Activated CD4-positive, alpha-beta memory T cell treated with anti-CD3 and anti-CD28 coated beads, Interleukin-2, amount 10 ng/mL, durations not matched to agents 7 days and 5 days (primary cell): ENCODE measurements at regions of chr11 and their contacts with region 1.

Region 1: DNA sequence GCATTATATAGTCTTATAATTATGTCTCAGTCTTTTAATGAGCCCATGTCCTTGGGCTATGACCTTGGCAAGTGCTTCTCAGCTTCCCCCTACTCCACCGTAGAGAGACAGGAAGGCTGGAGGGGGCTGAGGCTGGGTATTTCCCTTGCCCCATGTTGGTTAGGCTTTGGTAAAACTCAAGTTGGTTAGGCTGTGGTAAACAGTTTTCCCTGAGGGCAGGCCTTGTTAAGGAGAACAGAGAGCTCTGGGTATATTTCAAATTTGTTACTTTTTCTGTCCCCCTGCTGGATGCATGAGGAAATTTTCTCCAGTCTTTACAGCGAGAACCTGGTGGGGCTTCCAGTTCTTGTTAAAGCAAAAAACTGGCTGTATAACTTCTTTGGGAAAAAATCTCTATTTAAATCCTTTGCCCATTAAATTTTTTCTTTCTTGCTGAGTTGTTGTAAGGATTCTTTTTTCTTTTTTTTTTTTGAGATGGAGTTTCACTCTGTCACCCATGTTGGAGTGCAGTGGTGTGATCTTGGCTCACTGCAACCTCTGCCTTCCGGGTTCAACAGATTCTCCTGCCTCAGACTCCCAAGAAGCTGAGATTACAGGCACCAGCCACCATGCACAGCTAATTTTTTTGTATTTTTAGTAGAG is 12.2 kb upstream of the DCHS1 start:
- DNase-seq: peak; percentile 57
- H3K4me3 Mint-ChIP-seq: no peak overlapping the region
- H3K27ac Mint-ChIP-seq: peak overlapping the region; percentile 2
- H3K4me1 Mint-ChIP-seq: peaks cover 59% of the 10 kb centered on the region
- H3K27me3 Mint-ChIP-seq: peaks cover 6% of the 10 kb centered on the region

Region 2: GRCh38 chr11:6531267-6531752 is 136.5 kb before region 1 on chr11:
- CTCF ChIA-PET with region 1: interaction called, 12 read pairs
- POLR2A ChIA-PET with region 1: no interaction called
- DNase-seq: peak; percentile 29
- H3K4me3 Mint-ChIP-seq: no peak overlapping the region
- H3K27ac Mint-ChIP-seq: no peak overlapping the region
- H3K4me1 Mint-ChIP-seq: peaks cover 10% of the 10 kb centered on the region
- H3K27me3 Mint-ChIP-seq: no peaks in the 10 kb centered on the region

Region 3: GRCh38 chr11:6603287-6604080 is 64.4 kb before region 1 on chr11 and contains the starts of genes ILK and RRP8:
- CTCF ChIA-PET with region 1: interaction called, 14 read pairs
- POLR2A ChIA-PET with region 1: interaction called, 7 read pairs
- DNase-seq: peak; percentile 91
- H3K4me3 Mint-ChIP-seq: no peak within 1 kb of the TSS
- H3K27ac Mint-ChIP-seq: no peak within 1 kb of the TSS
- H3K4me1 Mint-ChIP-seq: peaks cover 13% of the 10 kb centered on the region
- H3K27me3 Mint-ChIP-seq: no peaks in the 10 kb centered on the region
- total RNA-seq, gene ILK: 135 to 138 TPM
- total RNA-seq, gene RRP8: 21.8 to 24.4 TPM

Region 4: DNA sequence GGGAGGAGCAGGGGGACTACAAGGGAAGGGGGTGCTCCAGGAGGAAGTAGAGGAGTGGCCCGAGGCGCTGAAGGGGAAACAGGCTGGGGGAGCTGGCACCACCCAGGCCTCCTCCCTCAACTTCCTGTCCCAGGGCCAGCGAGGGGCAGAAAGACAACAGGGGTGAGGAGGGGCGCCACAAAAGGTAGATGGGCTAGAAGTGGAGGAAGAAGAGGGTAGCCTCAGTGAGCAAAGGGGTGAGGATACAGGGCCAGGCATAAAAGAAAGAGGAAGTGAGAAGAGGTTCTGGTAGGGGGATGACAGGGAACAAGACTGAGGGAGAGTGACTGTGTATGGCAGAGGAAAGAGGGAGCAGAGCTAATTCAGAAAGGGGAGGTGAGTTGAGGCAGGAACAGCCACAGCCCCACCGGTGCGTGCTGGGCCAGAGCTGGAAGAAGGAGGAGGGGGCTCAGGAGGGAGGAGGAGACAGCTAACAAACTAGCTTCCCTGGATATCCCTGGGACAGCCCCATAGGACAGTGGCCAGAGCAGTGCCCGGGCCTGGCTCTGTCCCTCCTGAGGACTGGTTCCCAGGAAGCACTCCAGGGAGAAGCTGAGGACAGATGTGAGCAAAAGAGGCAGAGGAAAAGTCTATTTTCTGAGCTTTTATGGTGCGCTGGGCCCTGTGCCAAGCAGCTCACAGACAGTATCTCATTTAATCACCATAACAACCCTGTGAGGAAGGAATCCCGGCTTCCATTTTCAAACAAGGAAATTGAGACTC is 20.8 kb before region 1 on chr11:
- CTCF ChIA-PET with region 1: interaction called, 18 read pairs
- POLR2A ChIA-PET with region 1: interaction called, 6 read pairs
- DNase-seq: peak; percentile 36
- H3K4me3 Mint-ChIP-seq: no peak overlapping the region
- H3K27ac Mint-ChIP-seq: no peak overlapping the region
- H3K4me1 Mint-ChIP-seq: no peaks in the 10 kb centered on the region
- H3K27me3 Mint-ChIP-seq: no peaks in the 10 kb centered on the region

Region 5: GRCh38 chr11:6719576-6719975 is 51.7 kb after region 1 on chr11:
- CTCF ChIA-PET with region 1: no interaction called
- POLR2A ChIA-PET with region 1: no interaction called
- DNase-seq: no peak
- H3K4me3 Mint-ChIP-seq: no peak overlapping the region
- H3K27ac Mint-ChIP-seq: no peak overlapping the region
- H3K4me1 Mint-ChIP-seq: peaks cover 46% of the 10 kb centered on the region
- H3K27me3 Mint-ChIP-seq: no peaks in the 10 kb centered on the region